Activated CD4-positive, alpha-beta T cell treated with anti-CD3 and anti-CD28 coated beads, Interleukin-2, amount 10 ng/mL, durations not matched to agents 24 days and 14 days (primary cell): ENCODE measurements at regions of chr6 and their contacts with region 1.

Region 1: DNA sequence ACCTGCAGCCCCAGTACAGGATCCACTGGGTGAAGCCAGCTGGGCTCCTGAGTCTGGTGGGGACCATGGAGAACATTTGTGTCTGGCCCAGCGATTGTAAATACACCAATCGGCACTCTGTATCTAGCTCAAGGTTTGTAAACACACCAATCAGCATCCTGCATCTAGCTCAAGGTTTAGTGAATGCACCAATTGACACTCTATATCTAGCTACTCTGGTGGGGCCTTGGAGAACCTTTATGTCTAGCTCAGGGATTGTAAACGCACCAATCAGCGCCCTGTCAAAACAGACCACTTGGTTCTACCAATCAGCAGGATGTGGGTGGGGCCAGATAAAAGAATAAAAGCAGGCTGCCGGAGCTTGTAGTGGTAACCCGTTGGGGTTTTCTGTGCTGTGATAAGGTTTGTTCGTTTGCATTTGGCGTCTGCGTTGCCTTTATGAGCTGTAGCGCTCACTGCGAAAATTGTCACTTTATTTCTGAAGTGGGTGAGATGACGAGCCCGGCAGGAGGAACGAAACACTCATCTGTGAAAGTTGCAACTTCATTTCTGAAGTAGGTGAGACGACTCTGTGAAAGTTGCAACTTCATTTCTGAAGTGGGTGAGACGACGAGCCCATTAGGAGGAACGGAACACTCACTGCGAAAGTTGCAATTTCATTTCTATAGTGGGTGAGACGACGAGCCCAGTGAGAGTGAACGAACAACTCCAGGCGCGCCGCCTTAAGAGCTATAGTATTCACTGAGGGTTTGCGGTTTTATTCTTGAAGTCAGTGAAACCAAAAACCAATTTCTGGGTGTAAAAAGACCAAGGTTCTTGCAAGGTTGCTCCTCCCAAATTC is 31.1 kb downstream of the SERPINB6 start:
- DNase-seq: peak; percentile 92
- H3K4me3 Mint-ChIP-seq: peak overlapping the region; percentile 67
- H3K27ac Mint-ChIP-seq: peak overlapping the region; percentile 97
- H3K4me1 Mint-ChIP-seq: peaks cover 51% of the 10 kb centered on the region
- H3K27me3 Mint-ChIP-seq: peaks cover 9% of the 10 kb centered on the region

Region 2: GRCh38 chr6:2846873-2847224 is 93.4 kb before region 1 on chr6:
- intact Hi-C with region 1: loop called (anchors 1 kb)
- DNase-seq: no peak
- H3K4me3 Mint-ChIP-seq: peak overlapping the region; percentile 4
- H3K27ac Mint-ChIP-seq: peak overlapping the region; percentile 6
- H3K4me1 Mint-ChIP-seq: peaks cover 48% of the 10 kb centered on the region
- H3K27me3 Mint-ChIP-seq: no peaks in the 10 kb centered on the region

Region 3: DNA sequence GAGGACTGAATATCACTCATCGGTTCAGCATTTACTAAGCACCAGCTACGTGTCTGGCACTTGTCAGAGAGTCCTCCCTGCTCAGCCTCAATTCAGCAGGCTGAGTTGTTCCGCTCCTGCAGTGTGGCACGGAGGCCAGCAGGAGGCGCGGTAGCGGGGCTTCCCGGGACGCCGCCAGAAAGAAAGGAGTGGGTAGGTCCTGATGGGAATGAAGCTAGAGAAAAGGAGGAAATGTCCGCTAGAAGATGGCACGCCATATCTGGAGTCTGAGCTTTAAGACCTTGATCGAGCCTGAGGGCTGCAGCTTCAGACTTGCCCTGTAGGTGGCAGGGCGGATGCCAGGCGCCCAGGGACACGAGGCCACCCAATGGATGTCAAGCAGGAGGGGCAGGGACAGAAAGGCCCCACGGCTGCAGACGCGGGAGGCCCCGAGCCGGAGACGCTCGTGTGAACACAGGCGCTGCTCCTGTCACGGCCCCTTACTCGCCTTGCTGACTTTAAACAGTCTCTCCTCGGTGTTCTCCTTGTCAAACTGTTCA is 12.4 kb after region 1 on chr6:
- intact Hi-C with region 1: loop called (anchors 1 kb)
- DNase-seq: peak; percentile 86
- H3K4me3 Mint-ChIP-seq: peak overlapping the region; percentile 62
- H3K27ac Mint-ChIP-seq: peak overlapping the region; percentile 64
- H3K4me1 Mint-ChIP-seq: peaks cover 9% of the 10 kb centered on the region
- H3K27me3 Mint-ChIP-seq: peaks cover 3% of the 10 kb centered on the region

Region 4: DNA sequence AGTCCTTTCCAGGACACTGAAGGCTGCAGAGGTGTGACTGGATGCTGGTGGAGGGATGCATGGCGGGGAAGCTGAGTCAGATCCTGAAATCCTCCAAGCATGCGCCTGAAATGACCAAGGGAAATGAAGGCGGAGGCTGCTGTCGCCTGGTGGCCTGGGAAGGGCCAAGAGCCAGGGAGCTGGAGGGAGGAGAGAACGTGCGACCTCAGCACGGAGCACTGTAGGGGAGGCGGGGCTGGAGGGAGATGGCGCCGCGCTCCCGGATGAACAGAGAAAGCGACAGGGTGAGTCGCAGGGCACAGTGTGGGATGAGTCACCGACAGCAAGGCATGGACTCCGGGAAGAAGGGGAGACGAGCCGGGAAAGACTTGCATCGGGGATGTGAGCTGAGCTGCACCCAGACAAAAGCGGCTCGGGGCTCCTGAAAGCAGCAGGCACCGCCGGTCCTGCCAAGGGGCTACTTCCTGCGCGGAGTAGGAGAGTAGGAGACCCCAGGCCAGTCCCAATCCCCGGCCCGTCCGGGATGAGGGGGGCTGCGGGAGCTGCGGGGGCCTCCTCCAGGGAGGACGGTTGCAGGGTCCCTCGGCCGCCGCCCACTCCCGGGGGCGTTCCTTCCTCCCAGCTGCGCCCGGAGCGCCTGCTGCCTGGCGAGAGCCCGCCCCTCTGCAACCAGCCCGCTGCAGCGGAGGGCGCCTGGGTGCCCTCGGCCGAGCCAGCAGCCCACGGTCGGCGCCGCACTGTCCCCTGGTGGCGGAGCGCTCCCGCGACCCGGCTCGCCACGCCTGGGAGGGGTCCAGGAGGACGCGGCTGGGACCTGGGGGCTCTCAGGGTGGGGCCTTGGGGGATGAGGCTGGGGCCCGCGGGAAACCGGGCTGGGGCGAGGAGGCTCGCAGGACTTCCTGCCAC is 48.4 kb after region 1 on chr6:
- intact Hi-C with region 1: loop called (anchors 1 kb)
- DNase-seq: peak; percentile 93
- H3K4me3 Mint-ChIP-seq: peak overlapping the region; percentile 89
- H3K27ac Mint-ChIP-seq: peak overlapping the region; percentile 99
- H3K4me1 Mint-ChIP-seq: peaks cover 22% of the 10 kb centered on the region
- H3K27me3 Mint-ChIP-seq: peaks cover 3% of the 10 kb centered on the region

Region 5: GRCh38 chr6:3052481-3053230 is 112.4 kb after region 1 on chr6:
- intact Hi-C with region 1: no loop called
- DNase-seq: no peak
- H3K4me3 Mint-ChIP-seq: peak overlapping the region; percentile 82
- H3K27ac Mint-ChIP-seq: peak overlapping the region; percentile 68
- H3K4me1 Mint-ChIP-seq: peaks cover 28% of the 10 kb centered on the region
- H3K27me3 Mint-ChIP-seq: peaks cover 10% of the 10 kb centered on the region

Region 6: DNA sequence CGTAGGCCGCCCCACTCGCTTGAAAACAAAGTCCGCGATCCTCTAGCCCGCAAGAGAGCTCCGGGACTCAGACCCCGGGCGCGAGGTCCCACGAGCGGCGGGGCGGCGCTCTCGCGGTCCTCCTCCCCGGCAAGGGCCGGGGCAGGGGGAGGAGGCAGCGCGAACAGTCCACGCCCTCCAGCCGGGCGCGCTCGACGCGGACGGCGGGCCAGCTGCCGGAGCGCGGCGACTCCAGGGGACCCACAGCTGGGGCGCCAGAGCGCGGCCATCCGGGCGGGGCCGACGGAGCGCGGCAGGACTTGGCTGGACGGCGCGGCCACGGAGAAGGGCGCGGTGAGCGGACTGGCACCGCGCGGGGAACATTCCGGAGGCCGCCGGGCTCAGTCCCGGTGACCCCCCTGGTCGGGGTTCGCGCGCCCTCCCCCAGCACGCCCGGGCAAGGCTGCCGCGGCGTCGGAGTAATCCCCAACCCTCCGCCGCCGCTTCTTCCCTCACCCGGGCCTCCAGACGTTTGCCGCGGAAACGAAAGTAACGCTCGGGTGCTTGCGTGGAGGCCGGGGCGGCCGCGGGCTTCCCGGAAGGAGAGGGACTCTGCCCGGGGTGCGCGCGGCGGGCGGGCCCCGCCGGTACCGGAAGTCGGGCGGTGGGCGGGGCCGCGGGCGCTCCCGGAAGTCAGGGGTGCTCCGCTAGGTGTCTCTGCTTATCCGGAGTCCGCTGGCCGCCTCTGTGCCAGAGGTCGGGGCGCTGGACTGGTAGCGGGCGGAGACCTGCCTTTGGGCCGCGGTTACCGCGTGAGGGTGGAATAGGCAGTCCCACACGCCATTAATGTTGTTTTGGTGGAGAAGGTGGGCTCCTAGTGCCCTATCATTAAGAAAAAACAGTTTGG is 128.3 kb after region 1 on chr6 and contains the start of gene RIPK1:
- intact Hi-C with region 1: loop called (anchors 2 kb)
- DNase-seq: peak; percentile 99
- H3K4me3 Mint-ChIP-seq: peak within 1 kb of the TSS; percentile 98
- H3K27ac Mint-ChIP-seq: peak within 1 kb of the TSS; percentile 97
- H3K4me1 Mint-ChIP-seq: peaks cover 47% of the 10 kb centered on the region
- H3K27me3 Mint-ChIP-seq: no peaks in the 10 kb centered on the region
- total RNA-seq, gene RIPK1: 17.0 and 17.9 TPM in 2 replicates

Region 7: DNA sequence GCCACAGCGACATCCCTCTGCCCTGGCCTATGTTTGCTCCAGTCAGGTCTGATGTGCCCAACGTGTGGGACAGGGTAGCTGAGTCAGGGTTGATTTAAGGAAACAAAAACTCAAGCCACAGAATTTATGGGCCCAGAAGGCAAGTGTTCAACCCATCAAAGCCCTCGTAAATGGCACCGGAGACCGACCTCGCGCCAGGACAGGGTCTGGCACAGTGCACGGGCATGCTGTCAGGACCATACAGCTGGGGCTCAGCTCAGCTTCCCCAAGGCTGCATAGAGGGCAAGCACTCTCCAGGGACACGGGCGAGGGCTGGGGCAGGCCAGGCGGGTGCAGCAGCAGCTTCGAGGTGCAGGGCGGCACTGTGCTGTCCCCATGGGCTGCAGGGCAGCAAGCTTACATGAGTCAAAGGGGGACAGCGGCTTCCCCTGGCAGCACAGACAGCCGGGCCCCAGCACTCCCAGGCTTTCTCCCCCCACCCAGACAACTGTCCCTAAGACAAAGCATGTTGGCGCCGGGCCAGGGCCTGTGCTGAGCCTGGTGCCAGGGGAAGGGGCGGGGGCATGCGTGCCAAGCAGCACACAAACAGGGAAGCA is 344.1 kb after region 1 on chr6:
- intact Hi-C with region 1: no loop called
- DNase-seq: no peak
- H3K4me3 Mint-ChIP-seq: no peak overlapping the region
- H3K27ac Mint-ChIP-seq: no peak overlapping the region
- H3K4me1 Mint-ChIP-seq: peaks cover 3% of the 10 kb centered on the region
- H3K27me3 Mint-ChIP-seq: no peaks in the 10 kb centered on the region